ENCODE measurements at regions of chr3 and their contacts with region 1.

Region 1: DNA sequence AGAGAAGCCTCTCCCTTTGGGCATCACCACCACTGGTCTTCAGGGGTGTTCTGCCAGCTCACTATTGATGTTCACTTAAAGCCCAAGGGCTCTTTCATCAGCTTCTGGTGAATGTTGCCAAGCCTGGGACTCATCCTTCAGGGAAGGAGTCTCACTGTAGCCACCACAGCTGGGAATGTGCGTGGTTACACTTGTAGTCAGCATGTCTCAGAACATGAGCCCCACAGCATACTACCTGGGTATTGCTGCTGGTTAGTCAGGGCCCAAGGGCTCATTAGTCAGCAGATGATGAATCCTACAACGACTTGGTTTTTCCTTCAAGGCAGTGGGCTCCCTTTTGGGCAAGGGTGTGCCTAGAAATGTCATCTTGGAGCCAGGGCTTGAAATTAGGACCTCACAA is 412.9 kb downstream of the VGLL3 start:
- DNase-seq: no peak
- ATAC-seq: no peak
- H3K4me3 ChIP-seq: no peak overlapping the region
- H3K27ac ChIP-seq: no peak overlapping the region
- H3K4me1 ChIP-seq: no peaks in the 10 kb centered on the region
- H3K27me3 ChIP-seq: no peaks in the 10 kb centered on the region
- CTCF ChIP-seq: no peak
- POLR2A ChIP-seq: no peak
- RAD21 ChIP-seq: no peak

Region 2: GRCh38 chr3:86537171-86537570 is 40.9 kb before region 1 on chr3:
- CTCF ChIA-PET with region 1: no interaction called
- POLR2A ChIA-PET with region 1: no interaction called
- dilution Hi-C with region 1: no loop called
- in situ Hi-C with region 1: no loop called
- intact Hi-C with region 1: loop called (anchors 1 kb)
- DNase-seq: no peak
- ATAC-seq: no peak
- H3K4me3 ChIP-seq: no peak overlapping the region
- H3K27ac ChIP-seq: no peak overlapping the region
- H3K4me1 ChIP-seq: no peaks in the 10 kb centered on the region
- H3K27me3 ChIP-seq: no peaks in the 10 kb centered on the region
- CTCF ChIP-seq: no peak
- POLR2A ChIP-seq: no peak
- RAD21 ChIP-seq: no peak

Region 3: DNA sequence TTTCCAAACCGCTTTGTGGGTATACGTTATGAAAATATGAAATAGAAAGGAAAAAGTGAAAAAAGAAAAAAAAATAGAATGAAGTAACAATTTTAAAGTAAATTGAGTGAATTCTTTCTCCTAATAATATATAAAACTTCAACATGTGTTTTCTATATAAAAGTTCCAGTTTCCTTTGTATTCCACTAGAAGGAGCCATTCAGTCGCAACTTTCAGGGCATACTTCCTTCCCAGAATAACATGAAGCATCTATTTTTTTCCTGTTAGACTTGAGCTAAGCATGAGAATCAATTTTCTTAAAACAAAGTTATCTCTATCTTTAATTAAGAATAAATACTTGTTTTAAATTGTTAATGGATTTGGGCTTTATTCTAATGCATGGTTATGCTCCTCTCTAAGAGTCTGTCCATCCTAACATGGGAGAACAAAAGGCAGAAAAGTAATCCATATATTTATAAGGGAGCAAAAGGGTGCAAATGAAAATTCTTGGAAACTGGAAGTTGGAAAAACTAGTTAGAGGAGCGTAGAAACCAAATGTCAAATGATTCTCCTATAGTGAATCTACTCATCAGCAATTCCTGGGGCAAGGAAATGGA is 428.9 kb after region 1 on chr3:
- CTCF ChIA-PET with region 1: no interaction called
- POLR2A ChIA-PET with region 1: no interaction called
- dilution Hi-C with region 1: no loop called
- in situ Hi-C with region 1: no loop called
- intact Hi-C with region 1: loop called (anchors 10 kb)
- DNase-seq: peak; percentile 50
- ATAC-seq: peak; percentile 65
- H3K4me3 ChIP-seq: no peak overlapping the region
- H3K27ac ChIP-seq: no peak overlapping the region
- H3K4me1 ChIP-seq: no peaks in the 10 kb centered on the region
- H3K27me3 ChIP-seq: no peaks in the 10 kb centered on the region
- CTCF ChIP-seq: peak; percentile 52
- POLR2A ChIP-seq: no peak
- RAD21 ChIP-seq: peak; percentile 45

Measured in IMR-90 (cell line).